WTC11 (cell line): ENCODE measurements at regions of chr19 and their contacts with region 1.

Region 1: GRCh38 chr19:42401365-42402303 is 11.5 kb upstream of the CNFN start:
- DNase-seq: peak; percentile 89
- ATAC-seq: peak; percentile 26
- H3K4me3 Mint-ChIP-seq: peak overlapping the region; percentile 77
- H3K27ac Mint-ChIP-seq: peak overlapping the region; percentile 85
- H3K4me1 Mint-ChIP-seq: peaks cover 26% of the 10 kb centered on the region
- H3K27me3 Mint-ChIP-seq: peaks cover 46% of the 10 kb centered on the region
- CTCF ChIP-seq: peak; percentile 82

Region 2: GRCh38 chr19:42207767-42208271 is 193.8 kb before region 1 on chr19:
- CTCF ChIA-PET with region 1: no interaction called
- POLR2A ChIA-PET with region 1: no interaction called
- DNase-seq: no peak
- ATAC-seq: no peak
- H3K4me3 Mint-ChIP-seq: no peak overlapping the region
- H3K27ac Mint-ChIP-seq: no peak overlapping the region
- H3K4me1 Mint-ChIP-seq: peaks cover 16% of the 10 kb centered on the region
- H3K27me3 Mint-ChIP-seq: no peaks in the 10 kb centered on the region
- CTCF ChIP-seq: no peak

Region 3: GRCh38 chr19:42333018-42333417 is 68.6 kb before region 1 on chr19:
- CTCF ChIA-PET with region 1: no interaction called
- POLR2A ChIA-PET with region 1: no interaction called
- DNase-seq: no peak
- ATAC-seq: no peak
- H3K4me3 Mint-ChIP-seq: no peak overlapping the region
- H3K27ac Mint-ChIP-seq: no peak overlapping the region
- H3K4me1 Mint-ChIP-seq: peaks cover 14% of the 10 kb centered on the region
- H3K27me3 Mint-ChIP-seq: no peaks in the 10 kb centered on the region
- CTCF ChIP-seq: no peak

Region 4: DNA sequence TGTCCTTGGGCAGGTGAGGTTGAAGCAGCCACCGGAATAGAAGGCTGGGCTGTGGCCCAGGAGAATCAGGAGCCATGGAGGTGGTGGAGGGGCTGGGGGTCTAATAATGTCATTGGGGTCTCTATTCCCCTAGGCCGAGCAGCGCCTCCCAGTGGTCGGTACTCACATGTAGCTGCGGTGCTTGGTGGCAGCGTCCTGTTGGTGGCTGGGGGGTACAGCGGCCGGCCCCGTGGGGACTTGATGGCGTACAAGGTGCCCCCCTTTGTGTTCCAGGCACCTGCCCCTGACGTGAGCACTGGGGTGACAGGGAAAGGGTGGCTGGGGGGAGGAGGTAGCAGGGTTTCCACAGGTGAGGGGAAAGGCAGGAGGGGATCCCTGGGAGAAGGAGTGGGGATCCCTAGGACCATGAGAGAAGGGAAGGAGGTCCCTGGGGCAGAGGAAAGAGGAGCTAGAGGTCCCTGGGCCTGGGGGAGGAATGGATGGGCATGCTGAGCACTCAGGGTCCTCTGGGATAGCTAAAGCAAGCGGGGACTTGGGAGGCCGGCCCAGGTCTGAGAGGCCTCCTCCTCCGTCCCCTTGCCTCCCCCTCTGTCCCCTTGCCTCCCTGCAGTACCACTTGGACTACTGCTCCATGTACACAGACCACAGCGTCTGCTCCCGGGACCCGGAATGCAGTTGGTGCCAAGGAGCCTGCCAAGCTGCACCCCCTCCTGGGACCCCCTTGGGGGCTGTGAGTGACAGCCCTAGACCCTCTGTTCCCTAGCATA is 58.1 kb before region 1 on chr19:
- CTCF ChIA-PET with region 1: interaction called, 11 read pairs
- POLR2A ChIA-PET with region 1: no interaction called
- DNase-seq: peak; percentile 76
- ATAC-seq: peak; percentile 80
- H3K4me3 Mint-ChIP-seq: no peak overlapping the region
- H3K27ac Mint-ChIP-seq: no peak overlapping the region
- H3K4me1 Mint-ChIP-seq: no peaks in the 10 kb centered on the region
- H3K27me3 Mint-ChIP-seq: no peaks in the 10 kb centered on the region
- CTCF ChIP-seq: peak; percentile 63

Region 5: DNA sequence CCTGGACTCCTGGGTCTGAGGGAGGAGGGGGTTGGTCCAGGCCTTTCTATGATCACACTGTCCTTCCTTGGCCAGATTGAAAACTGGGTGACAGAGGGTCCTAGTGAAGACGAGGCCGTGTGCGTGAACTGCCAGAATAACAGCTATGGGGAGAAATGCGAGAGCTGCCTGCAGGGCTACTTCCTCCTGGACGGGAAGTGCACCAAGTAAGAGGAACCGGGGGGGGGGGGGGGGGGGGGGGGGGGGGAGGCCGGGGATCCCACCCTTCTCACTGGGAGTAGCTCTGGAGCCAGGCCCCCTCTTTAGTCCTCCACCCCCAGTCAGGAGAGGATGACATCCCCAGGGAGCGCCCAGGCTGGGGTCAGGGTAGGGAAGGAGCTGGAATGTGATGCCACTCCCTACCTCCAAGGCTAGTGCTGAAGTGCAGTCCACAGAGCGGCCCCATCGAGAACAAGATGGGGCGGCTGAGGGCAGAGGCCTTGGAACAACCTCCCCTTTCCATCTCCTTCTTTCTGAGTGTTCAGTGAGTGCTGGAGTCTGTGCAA is 30.9 kb before region 1 on chr19:
- CTCF ChIA-PET with region 1: interaction called, 21 read pairs
- POLR2A ChIA-PET with region 1: interaction called, 8 read pairs
- DNase-seq: no peak
- ATAC-seq: peak; percentile 14
- H3K4me3 Mint-ChIP-seq: peak overlapping the region; percentile 43; the same call in 1 of the 2 replicates
- H3K27ac Mint-ChIP-seq: peak overlapping the region; percentile 84
- H3K4me1 Mint-ChIP-seq: peaks cover 51% of the 10 kb centered on the region
- H3K27me3 Mint-ChIP-seq: no peaks in the 10 kb centered on the region
- CTCF ChIP-seq: no peak

Region 6: DNA sequence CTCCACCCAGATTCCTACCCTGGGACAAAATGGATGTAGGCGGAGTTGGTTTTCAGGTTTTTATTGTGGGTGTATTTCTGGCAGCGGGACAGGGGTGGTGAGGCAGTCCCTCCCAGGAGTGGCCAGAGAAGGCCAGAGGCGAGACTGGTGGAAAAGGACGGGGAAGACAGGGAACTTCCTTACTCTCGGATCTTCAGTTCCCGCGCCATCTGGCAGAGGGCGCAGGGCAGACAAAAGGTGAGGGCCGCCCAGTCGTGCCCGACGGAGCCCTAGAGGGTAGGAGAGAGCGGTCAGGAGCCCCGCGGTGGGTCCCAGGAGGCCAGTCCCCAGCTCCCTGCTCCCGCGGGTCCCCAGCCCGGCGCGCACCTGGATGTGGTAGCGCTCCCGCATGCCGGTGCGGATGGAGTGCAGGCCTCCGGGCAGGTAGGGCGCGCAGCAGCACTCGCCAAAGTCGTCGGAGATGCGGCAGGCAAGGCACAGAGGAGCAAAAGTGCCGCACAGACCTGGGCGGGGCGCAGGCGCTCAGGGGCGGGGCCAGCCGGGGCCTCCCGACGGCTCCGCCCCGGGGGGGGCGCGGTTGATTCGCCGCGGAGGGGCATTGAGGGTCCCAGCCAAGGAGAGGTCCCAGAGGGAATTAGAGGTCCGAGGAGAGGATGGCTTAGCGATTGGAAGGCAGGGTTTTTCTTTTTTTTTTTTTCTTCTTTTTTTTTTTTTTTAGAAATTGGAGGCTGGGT is 14.5 kb before region 1 on chr19:
- CTCF ChIA-PET with region 1: interaction called, 20 read pairs
- POLR2A ChIA-PET with region 1: interaction called, 3 read pairs
- DNase-seq: peak; percentile 89
- ATAC-seq: peak; percentile 93
- H3K4me3 Mint-ChIP-seq: peak overlapping the region; percentile 75
- H3K27ac Mint-ChIP-seq: peak overlapping the region; percentile 83
- H3K4me1 Mint-ChIP-seq: peaks cover 18% of the 10 kb centered on the region
- H3K27me3 Mint-ChIP-seq: peaks cover 50% of the 10 kb centered on the region
- CTCF ChIP-seq: no peak; the same call in 1 of the 2 replicates

Region 7: GRCh38 chr19:42412227-42412626 is 10.6 kb after region 1 on chr19:
- CTCF ChIA-PET with region 1: interaction called, 16 read pairs
- POLR2A ChIA-PET with region 1: interaction called, 4 read pairs
- DNase-seq: peak; percentile 62
- ATAC-seq: peak; percentile 82
- H3K4me3 Mint-ChIP-seq: no peak overlapping the region
- H3K27ac Mint-ChIP-seq: no peak overlapping the region
- H3K4me1 Mint-ChIP-seq: peaks cover 15% of the 10 kb centered on the region
- H3K27me3 Mint-ChIP-seq: peaks cover 90% of the 10 kb centered on the region
- CTCF ChIP-seq: no peak

Region 8: GRCh38 chr19:42423462-42424344 is 22.1 kb after region 1 on chr19:
- CTCF ChIA-PET with region 1: interaction called, 28 read pairs
- POLR2A ChIA-PET with region 1: interaction called, 13 read pairs
- DNase-seq: peak; percentile 93
- ATAC-seq: peak; percentile 90
- H3K4me3 Mint-ChIP-seq: peak overlapping the region; percentile 82
- H3K27ac Mint-ChIP-seq: no peak overlapping the region
- H3K4me1 Mint-ChIP-seq: peaks cover 31% of the 10 kb centered on the region
- H3K27me3 Mint-ChIP-seq: peaks cover 98% of the 10 kb centered on the region
- CTCF ChIP-seq: no peak

Region 9: GRCh38 chr19:42589792-42590191 is 188.2 kb after region 1 on chr19:
- CTCF ChIA-PET with region 1: no interaction called
- POLR2A ChIA-PET with region 1: no interaction called
- DNase-seq: no peak
- ATAC-seq: no peak
- H3K4me3 Mint-ChIP-seq: no peak overlapping the region
- H3K27ac Mint-ChIP-seq: no peak overlapping the region
- H3K4me1 Mint-ChIP-seq: peaks cover 7% of the 10 kb centered on the region
- H3K27me3 Mint-ChIP-seq: peaks cover 7% of the 10 kb centered on the region; the same call in 1 of the 2 replicates
- CTCF ChIP-seq: no peak